IMR-90 (cell line): ENCODE measurements at regions of chr14 and their contacts with region 1.

Region 1: GRCh38 chr14:73058224-73058921 is at the start of gene RBM25:
- DNase-seq: peak; percentile 99
- ATAC-seq: peak; percentile 98
- H3K4me3 ChIP-seq: peak within 1 kb of the TSS; percentile 73
- H3K27ac ChIP-seq: peak within 1 kb of the TSS; percentile 92
- H3K4me1 ChIP-seq: peaks cover 1% of the 10 kb centered on the region; the same call in 1 of the 2 replicates
- H3K27me3 ChIP-seq: no peaks in the 10 kb centered on the region
- CTCF ChIP-seq: no peak
- POLR2A ChIP-seq: peak; percentile 99
- RAD21 ChIP-seq: no peak
- total RNA-seq, gene RBM25: 32.3 and 46.1 TPM in 2 replicates

Region 2: DNA sequence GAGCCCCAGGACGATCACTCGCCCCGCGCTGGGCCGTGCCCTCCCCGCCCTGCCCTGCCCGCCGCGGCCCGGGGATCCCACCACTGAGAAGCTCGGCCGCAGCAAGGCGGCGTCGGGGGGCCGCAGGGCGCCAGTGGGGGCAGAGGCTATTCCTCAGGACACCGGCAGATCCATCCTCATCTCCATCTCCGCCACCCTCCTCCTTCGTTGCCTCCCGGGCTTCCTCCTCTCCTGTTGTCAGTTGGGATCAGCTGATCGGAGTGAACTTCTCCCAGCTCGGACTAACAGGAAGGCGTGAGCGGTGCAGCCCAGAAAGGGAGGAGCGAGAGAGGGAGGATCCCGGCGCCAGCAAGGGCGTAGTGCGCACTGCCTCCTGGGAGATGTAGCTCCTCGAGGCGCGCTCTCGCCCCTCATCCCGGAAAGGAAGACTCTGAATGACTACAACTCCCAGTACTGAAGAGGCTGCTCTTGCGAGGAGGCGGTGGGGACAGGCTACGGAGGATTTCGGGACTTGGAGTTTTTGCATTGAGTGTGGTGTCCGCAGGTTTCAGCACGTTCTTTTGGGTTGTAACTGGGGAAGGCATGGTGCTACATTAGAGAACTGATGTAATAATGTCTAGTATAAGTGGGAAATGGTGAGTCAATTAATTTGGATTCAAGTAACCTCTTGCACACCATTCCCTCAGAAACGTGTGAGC is 31.4 kb before region 1 on chr14 and contains the start of gene ZFYVE1:
- CTCF ChIA-PET with region 1: no interaction called
- POLR2A ChIA-PET with region 1: interaction called, 3 read pairs
- dilution Hi-C with region 1: no loop called
- in situ Hi-C with region 1: no loop called
- intact Hi-C with region 1: loop called (anchors 1 kb)
- DNase-seq: peak; percentile 98
- ATAC-seq: peak; percentile 99
- H3K4me3 ChIP-seq: peak within 1 kb of the TSS; percentile 62
- H3K27ac ChIP-seq: peak within 1 kb of the TSS; percentile 69
- H3K4me1 ChIP-seq: no peaks in the 10 kb centered on the region
- H3K27me3 ChIP-seq: no peaks in the 10 kb centered on the region
- CTCF ChIP-seq: no peak
- POLR2A ChIP-seq: peak; percentile 82
- RAD21 ChIP-seq: no peak
- total RNA-seq, gene ZFYVE1: 11.1 and 12.2 TPM in 2 replicates

Region 3: GRCh38 chr14:73116079-73116665 is 57.8 kb after region 1 on chr14:
- CTCF ChIA-PET with region 1: no interaction called
- POLR2A ChIA-PET with region 1: no interaction called
- dilution Hi-C with region 1: no loop called
- in situ Hi-C with region 1: no loop called
- intact Hi-C with region 1: no loop called
- DNase-seq: no peak
- ATAC-seq: no peak
- H3K4me3 ChIP-seq: no peak overlapping the region
- H3K27ac ChIP-seq: no peak overlapping the region
- H3K4me1 ChIP-seq: no peaks in the 10 kb centered on the region
- H3K27me3 ChIP-seq: no peaks in the 10 kb centered on the region
- CTCF ChIP-seq: no peak
- POLR2A ChIP-seq: no peak
- RAD21 ChIP-seq: no peak

Region 4: DNA sequence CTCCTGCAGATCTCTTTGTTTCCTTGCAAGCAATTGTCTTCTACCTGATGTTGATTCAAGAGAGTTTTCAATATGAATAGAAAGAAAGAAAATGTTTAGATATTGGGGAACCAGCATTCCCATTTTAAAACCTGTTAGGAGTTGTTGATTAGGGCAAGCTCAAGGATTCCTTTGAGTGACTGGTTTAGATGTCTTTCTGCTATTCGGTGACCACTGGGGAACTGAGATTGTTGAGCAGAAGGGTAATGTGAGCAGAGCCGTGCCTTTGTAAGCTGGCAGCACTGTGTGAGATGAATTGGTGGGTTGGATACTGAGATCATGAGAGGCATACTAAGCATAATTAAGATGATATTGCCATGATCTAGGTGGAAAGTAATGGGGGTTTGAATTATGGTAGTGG is 139.9 kb after region 1 on chr14:
- CTCF ChIA-PET with region 1: no interaction called
- POLR2A ChIA-PET with region 1: no interaction called
- dilution Hi-C with region 1: no loop called
- in situ Hi-C with region 1: no loop called
- intact Hi-C with region 1: no loop called
- DNase-seq: no peak
- ATAC-seq: no peak
- H3K4me3 ChIP-seq: no peak overlapping the region
- H3K27ac ChIP-seq: no peak overlapping the region
- H3K4me1 ChIP-seq: no peaks in the 10 kb centered on the region
- H3K27me3 ChIP-seq: no peaks in the 10 kb centered on the region
- CTCF ChIP-seq: no peak
- POLR2A ChIP-seq: no peak
- RAD21 ChIP-seq: no peak

Region 5: GRCh38 chr14:73272393-73272792 is 214.0 kb after region 1 on chr14:
- CTCF ChIA-PET with region 1: no interaction called
- POLR2A ChIA-PET with region 1: no interaction called
- dilution Hi-C with region 1: no loop called
- in situ Hi-C with region 1: no loop called
- intact Hi-C with region 1: no loop called
- DNase-seq: no peak
- ATAC-seq: no peak
- H3K4me3 ChIP-seq: no peak overlapping the region
- H3K27ac ChIP-seq: no peak overlapping the region
- H3K4me1 ChIP-seq: peaks cover 4% of the 10 kb centered on the region
- H3K27me3 ChIP-seq: no peaks in the 10 kb centered on the region
- CTCF ChIP-seq: no peak
- POLR2A ChIP-seq: no peak
- RAD21 ChIP-seq: no peak